ENCODE measurements at regions of chr17 and their contacts with region 1.

Region 1: GRCh38 chr17:45148183-45149036 is at the start of gene HEXIM1:
- DNase-seq: peak; percentile 99
- ATAC-seq: peak; percentile 80
- H3K4me3 Mint-ChIP-seq: peak within 1 kb of the TSS; percentile 95
- H3K27ac Mint-ChIP-seq: peak within 1 kb of the TSS; percentile 100
- H3K4me1 Mint-ChIP-seq: peaks cover 39% of the 10 kb centered on the region
- H3K27me3 Mint-ChIP-seq: no peaks in the 10 kb centered on the region
- total RNA-seq, gene HEXIM1: 29.2 to 29.4 TPM

Region 2: DNA sequence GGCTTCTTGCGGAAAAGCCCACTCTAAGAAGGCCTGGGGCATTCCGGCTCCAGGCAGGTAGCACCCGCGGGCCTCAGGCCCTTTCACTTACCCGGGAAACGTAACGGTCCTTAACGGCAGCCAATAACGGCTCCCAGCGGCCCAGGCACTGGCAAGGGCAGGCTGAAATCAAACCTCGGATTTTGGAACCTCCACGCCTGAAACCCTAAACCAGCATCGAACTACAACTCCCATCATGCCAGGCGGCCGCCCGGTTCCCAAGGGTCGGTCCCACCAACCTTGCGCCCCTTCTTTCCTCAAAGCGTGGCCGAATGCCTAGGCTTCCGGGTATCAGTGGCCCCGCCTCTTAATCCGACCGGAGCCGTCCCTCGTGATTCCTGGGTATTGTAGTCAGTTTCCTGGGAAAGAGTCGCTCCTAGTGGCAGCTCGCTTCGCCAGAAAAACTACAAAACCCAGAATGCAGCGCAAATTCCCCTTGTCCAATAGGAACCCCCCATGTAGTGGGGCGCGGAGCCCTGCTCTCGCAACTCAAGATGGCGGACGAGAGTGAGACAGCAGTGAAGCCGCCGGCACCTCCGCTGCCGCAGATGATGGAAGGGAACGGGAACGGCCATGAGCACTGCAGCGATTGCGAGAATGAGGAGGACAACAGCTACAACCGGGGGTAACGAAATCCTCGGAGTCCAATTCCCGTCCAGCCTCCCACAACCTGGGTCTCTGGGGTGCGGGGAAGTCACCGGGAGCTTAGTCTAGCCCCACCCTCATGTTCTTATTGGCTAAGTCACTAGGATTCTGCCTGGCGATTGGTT is 87.4 kb before region 1 on chr17 and contains the start of gene NMT1:
- CTCF ChIA-PET with region 1: no interaction called
- POLR2A ChIA-PET with region 1: interaction called, 22 read pairs
- DNase-seq: peak; percentile 99
- ATAC-seq: peak; percentile 93
- H3K4me3 Mint-ChIP-seq: peak within 1 kb of the TSS; percentile 90
- H3K27ac Mint-ChIP-seq: peak within 1 kb of the TSS; percentile 96
- H3K4me1 Mint-ChIP-seq: peaks cover 35% of the 10 kb centered on the region
- H3K27me3 Mint-ChIP-seq: no peaks in the 10 kb centered on the region
- total RNA-seq, gene NMT1: 125 to 143 TPM

Region 3: GRCh38 chr17:45110668-45111611 is 37.5 kb before region 1 on chr17:
- CTCF ChIA-PET with region 1: no interaction called
- POLR2A ChIA-PET with region 1: no interaction called
- DNase-seq: no peak
- ATAC-seq: no peak
- H3K4me3 Mint-ChIP-seq: no peak overlapping the region
- H3K27ac Mint-ChIP-seq: no peak overlapping the region
- H3K4me1 Mint-ChIP-seq: no peaks in the 10 kb centered on the region
- H3K27me3 Mint-ChIP-seq: no peaks in the 10 kb centered on the region

Region 4: GRCh38 chr17:45172454-45173286 is 24.3 kb after region 1 on chr17:
- CTCF ChIA-PET with region 1: interaction called, 62 read pairs
- POLR2A ChIA-PET with region 1: interaction called, 44 read pairs
- DNase-seq: peak; percentile 68
- ATAC-seq: peak; percentile 79
- H3K4me3 Mint-ChIP-seq: peak overlapping the region; percentile 65
- H3K27ac Mint-ChIP-seq: peak overlapping the region; percentile 96
- H3K4me1 Mint-ChIP-seq: peaks cover 23% of the 10 kb centered on the region
- H3K27me3 Mint-ChIP-seq: no peaks in the 10 kb centered on the region

Region 5: GRCh38 chr17:45197555-45198334 is 49.3 kb after region 1 on chr17:
- CTCF ChIA-PET with region 1: interaction called, 160 read pairs
- POLR2A ChIA-PET with region 1: interaction called, 38 read pairs
- DNase-seq: peak; percentile 88
- ATAC-seq: peak; percentile 100
- H3K4me3 Mint-ChIP-seq: no peak overlapping the region
- H3K27ac Mint-ChIP-seq: no peak overlapping the region
- H3K4me1 Mint-ChIP-seq: peaks cover 5% of the 10 kb centered on the region
- H3K27me3 Mint-ChIP-seq: no peaks in the 10 kb centered on the region

Region 6: DNA sequence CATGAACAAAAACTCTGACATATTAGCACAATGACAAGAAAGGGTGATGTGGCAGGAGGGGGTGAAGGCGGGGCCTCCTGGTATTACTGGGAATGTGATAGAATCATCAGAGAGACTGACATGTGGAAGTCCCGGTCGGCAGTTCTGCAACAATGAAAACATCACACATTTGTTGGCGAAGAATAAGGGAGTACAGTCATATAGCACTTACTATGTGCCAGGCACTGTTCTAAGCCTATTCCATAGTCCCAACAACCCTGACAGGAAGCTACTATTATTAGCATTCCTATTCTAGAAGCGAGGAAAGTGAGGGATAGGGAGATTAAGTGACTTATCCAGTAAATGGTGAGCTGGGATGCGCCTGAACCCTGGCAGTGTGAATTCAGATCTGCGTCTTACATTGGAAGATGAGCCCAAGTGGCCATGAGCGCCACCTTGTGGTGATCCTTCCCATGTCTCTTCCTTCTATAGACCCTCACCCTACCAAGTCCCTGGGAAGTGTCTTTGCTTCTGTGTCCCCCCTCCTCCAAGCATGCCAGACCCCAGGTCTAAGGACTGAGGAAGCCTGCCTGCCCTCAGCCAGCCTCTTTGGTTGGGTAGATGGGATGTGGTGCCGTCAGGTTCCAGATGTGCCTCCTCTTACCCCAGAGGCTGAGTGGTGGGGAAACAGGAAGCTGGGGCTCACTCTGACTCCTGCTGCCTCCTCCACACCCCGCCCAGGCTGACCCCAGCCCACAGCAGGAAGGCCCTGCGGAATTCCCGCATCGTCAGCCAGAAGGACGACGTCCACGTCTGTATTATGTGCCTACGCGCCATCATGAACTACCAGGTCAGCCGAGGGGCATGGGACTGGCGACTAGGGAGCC is 87.2 kb after region 1 on chr17:
- CTCF ChIA-PET with region 1: interaction called, 14 read pairs
- POLR2A ChIA-PET with region 1: interaction called, 48 read pairs
- DNase-seq: peak; percentile 86
- ATAC-seq: peak; percentile 68
- H3K4me3 Mint-ChIP-seq: no peak overlapping the region
- H3K27ac Mint-ChIP-seq: peak overlapping the region; percentile 60
- H3K4me1 Mint-ChIP-seq: peaks cover 62% of the 10 kb centered on the region
- H3K27me3 Mint-ChIP-seq: no peaks in the 10 kb centered on the region

Region 7: DNA sequence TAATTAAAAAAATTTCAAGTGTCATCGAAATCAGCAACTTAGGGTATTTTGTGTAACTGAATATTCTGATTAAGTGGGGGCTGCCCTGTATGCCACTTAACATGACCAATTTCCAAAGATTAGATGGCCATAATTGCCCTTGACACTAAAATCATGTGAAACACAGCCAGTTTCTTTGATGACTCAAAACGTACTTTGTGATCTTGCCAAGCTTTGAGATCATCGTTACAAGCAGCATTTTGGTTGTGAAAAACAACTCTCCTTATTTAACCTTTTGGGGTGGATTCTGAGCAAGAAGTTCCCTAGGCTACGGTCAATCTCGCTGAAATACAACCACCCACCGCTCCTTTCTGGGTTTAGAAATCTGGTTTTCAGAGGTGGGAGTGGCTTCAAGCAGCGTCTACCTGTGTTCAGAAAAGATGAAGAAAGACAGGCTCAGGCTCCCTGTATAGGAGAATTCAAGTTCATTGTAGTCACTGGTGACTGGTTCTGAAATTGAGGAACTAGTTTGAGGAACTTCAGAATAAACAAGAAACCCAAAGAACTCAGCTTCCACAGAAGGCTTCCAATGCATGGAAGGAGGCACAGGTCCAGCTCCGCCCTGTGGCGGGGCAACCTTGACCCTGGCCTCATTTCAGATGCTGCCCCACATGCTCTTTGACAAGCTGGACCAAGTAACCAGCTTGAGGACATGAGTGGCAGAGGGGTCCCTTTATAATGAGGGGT is 159.0 kb after region 1 on chr17:
- CTCF ChIA-PET with region 1: interaction called, 5 read pairs
- POLR2A ChIA-PET with region 1: interaction called, 15 read pairs
- DNase-seq: peak; percentile 56
- ATAC-seq: peak; percentile 30
- H3K4me3 Mint-ChIP-seq: no peak overlapping the region
- H3K27ac Mint-ChIP-seq: peak overlapping the region; percentile 82
- H3K4me1 Mint-ChIP-seq: peaks cover 82% of the 10 kb centered on the region
- H3K27me3 Mint-ChIP-seq: no peaks in the 10 kb centered on the region

Region 8: DNA sequence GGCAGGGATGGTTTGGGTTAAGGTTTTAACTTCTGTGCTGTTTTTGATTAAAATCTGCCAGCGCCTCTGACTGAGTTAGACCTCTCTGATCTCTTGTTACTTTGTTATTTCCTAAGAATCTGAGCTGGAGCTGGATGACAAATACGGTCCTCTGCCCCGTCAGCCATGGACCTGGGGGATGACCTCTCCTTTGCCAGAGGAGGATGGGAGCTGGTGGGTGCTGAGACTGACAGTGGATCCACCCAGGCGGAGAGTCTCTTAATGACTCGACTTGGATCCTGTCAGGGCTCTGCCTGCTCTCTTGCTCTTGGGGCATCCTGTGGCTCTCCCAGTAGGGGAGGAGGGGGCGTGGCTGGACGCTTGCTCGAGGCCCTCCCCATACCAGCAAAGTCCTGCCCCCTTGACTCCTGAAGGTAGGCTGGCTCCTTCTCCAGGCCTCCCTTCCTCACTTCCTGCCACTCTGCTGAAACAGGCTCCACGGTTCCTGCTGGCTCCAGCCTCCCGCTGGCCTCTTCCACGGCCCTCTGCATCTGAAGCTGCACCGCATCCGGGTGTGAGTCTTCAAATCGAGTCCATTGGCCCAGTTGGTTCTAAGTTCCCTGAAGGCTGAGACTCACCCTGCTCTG is 193.2 kb after region 1 on chr17:
- CTCF ChIA-PET with region 1: no interaction called
- POLR2A ChIA-PET with region 1: no interaction called
- DNase-seq: no peak
- ATAC-seq: no peak
- H3K4me3 Mint-ChIP-seq: no peak overlapping the region
- H3K27ac Mint-ChIP-seq: peak overlapping the region; percentile 13
- H3K4me1 Mint-ChIP-seq: peaks cover 5% of the 10 kb centered on the region
- H3K27me3 Mint-ChIP-seq: no peaks in the 10 kb centered on the region